IMR-90 (cell line): ENCODE measurements at regions of chr16 and their contacts with region 1.

Region 1: GRCh38 chr16:1991948-1992703 is 2.4 kb downstream of the SYNGR3 start:
- DNase-seq: peak; percentile 83
- ATAC-seq: peak; percentile 95
- H3K4me3 ChIP-seq: peak overlapping the region; percentile 47
- H3K27ac ChIP-seq: no peak overlapping the region
- H3K4me1 ChIP-seq: peaks cover 22% of the 10 kb centered on the region
- H3K27me3 ChIP-seq: peaks cover 17% of the 10 kb centered on the region
- CTCF ChIP-seq: no peak
- POLR2A ChIP-seq: no peak
- RAD21 ChIP-seq: no peak

Region 2: GRCh38 chr16:2077016-2077415 is 84.9 kb after region 1 on chr16:
- CTCF ChIA-PET with region 1: no interaction called
- POLR2A ChIA-PET with region 1: interaction called, 11 read pairs
- dilution Hi-C with region 1: no loop called
- in situ Hi-C with region 1: no loop called
- intact Hi-C with region 1: no loop called
- DNase-seq: no peak
- ATAC-seq: no peak
- H3K4me3 ChIP-seq: no peak overlapping the region
- H3K27ac ChIP-seq: no peak overlapping the region
- H3K4me1 ChIP-seq: peaks cover 1% of the 10 kb centered on the region; the same call in 1 of the 2 replicates
- H3K27me3 ChIP-seq: no peaks in the 10 kb centered on the region
- CTCF ChIP-seq: no peak
- POLR2A ChIP-seq: no peak
- RAD21 ChIP-seq: no peak

Region 3: GRCh38 chr16:2180962-2181923 is 189.1 kb after region 1 on chr16:
- CTCF ChIA-PET with region 1: no interaction called
- POLR2A ChIA-PET with region 1: no interaction called
- dilution Hi-C with region 1: no loop called
- in situ Hi-C with region 1: no loop called
- intact Hi-C with region 1: no loop called
- DNase-seq: no peak
- ATAC-seq: no peak
- H3K4me3 ChIP-seq: no peak overlapping the region
- H3K27ac ChIP-seq: no peak overlapping the region
- H3K4me1 ChIP-seq: no peaks in the 10 kb centered on the region
- H3K27me3 ChIP-seq: no peaks in the 10 kb centered on the region; the same call in 1 of the 2 replicates
- CTCF ChIP-seq: no peak
- POLR2A ChIP-seq: no peak
- RAD21 ChIP-seq: no peak